ENCODE measurements at regions of chr3 and their contacts with region 1.

Region 1: GRCh38 chr3:171459942-171460724 is at the start of gene TNIK:
- DNase-seq: peak; percentile 97
- H3K4me3 ChIP-seq: peak within 1 kb of the TSS; percentile 61 to 95 (median 88)
- H3K27ac ChIP-seq: peak within 1 kb of the TSS; percentile 79 to 89 (median 88)
- H3K4me1 ChIP-seq: peaks cover 12 to 52% (median 49%) of the 10 kb centered on the region in 4 donors
- H3K27me3 ChIP-seq: no peaks in the 10 kb centered on the region
- CTCF ChIP-seq: no peak
- EP300 ChIP-seq: no peak
- POLR2A ChIP-seq: peak; percentile 31
- total RNA-seq, gene TNIK: 30.3 to 39.0 (median 36.8) TPM

Region 2: DNA sequence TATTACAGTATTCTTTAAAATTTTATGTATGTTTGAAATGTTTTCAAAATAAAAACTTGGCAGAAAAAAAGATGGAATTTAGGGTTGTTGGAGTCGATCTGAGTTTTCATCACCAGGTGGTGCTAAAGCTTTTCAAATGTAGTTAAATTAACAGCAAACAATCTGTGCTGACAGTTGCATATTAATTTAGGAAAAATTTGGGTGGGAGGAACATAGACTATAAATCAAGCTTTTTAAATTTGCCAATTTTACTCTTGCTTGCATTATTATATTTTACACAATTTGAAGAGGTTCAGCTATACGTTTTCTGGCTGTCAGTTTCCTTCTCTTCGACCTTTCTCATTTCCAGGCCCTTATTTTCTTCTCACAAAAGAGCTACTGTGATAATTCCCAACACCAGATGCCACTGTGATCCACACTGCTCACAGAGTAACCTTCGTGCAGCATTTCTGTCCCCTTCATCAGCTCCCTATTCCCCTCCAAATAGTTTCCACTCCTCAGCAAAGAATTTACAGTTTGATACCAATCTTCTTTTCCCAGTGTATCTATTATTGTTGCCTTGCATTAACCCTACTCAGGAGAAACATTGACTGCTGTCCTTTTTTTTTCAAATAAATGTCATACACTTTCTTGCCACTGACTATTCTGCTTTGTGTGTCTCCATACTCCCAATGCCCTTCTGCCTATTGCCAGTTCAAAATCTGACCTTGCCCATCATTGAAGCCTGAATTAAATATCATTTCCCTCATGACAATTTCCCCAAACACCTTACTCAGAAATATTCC is 498.3 kb before region 1 on chr3:
- intact Hi-C with region 1: loop called (anchors 10 kb)
- DNase-seq: no peak
- H3K4me3 ChIP-seq: no peak overlapping the region
- H3K27ac ChIP-seq: no peak overlapping the region
- H3K4me1 ChIP-seq: no peaks in the 10 kb centered on the region
- H3K27me3 ChIP-seq: no peaks in the 10 kb centered on the region
- CTCF ChIP-seq: peak; percentile 63 to 65 (median 63)
- EP300 ChIP-seq: no peak
- POLR2A ChIP-seq: no peak

Region 3: GRCh38 chr3:171068658-171069057 is 391.5 kb before region 1 on chr3:
- intact Hi-C with region 1: loop called (anchors 10 kb)
- DNase-seq: no peak
- H3K4me3 ChIP-seq: no peak overlapping the region
- H3K27ac ChIP-seq: no peak overlapping the region
- H3K4me1 ChIP-seq: no peaks in the 10 kb centered on the region
- H3K27me3 ChIP-seq: no peaks in the 10 kb centered on the region
- CTCF ChIP-seq: no peak
- EP300 ChIP-seq: no peak
- POLR2A ChIP-seq: no peak

Region 4: DNA sequence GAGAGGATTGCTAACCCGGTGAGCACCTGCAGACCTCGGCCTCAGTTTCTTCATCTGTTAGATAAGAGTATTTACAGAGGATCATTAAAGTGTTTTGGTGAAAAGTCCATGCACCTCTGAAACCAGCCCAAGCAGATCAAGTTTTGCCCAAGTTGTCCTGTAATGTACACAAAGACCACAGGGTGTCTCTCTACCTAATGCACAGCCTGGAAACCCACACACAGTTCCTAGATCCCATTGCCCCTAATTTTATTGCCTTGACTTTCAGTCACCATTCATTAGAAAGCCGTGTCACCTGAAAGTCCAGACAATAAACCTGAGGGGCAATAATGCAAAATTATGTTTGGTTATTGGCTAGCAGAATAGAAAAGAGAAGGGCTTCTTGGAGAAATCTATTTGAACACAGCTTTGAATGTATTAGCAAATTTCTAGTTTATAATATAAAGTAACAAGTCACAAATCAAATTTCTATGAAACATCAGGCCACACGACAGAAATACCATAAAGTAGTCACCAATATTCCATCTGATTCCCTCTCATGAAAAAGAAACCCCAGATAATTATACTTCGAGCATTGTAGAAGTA is 272.3 kb before region 1 on chr3:
- intact Hi-C with region 1: loop called (anchors 5 kb)
- DNase-seq: no peak
- H3K4me3 ChIP-seq: no peak overlapping the region
- H3K27ac ChIP-seq: no peak overlapping the region
- H3K4me1 ChIP-seq: peaks cover 19 to 50% (median 41%) of the 10 kb centered on the region in 4 donors
- H3K27me3 ChIP-seq: no peaks in the 10 kb centered on the region
- CTCF ChIP-seq: peak; percentile 55 to 58 (median 55)
- EP300 ChIP-seq: no peak
- POLR2A ChIP-seq: no peak

Region 5: DNA sequence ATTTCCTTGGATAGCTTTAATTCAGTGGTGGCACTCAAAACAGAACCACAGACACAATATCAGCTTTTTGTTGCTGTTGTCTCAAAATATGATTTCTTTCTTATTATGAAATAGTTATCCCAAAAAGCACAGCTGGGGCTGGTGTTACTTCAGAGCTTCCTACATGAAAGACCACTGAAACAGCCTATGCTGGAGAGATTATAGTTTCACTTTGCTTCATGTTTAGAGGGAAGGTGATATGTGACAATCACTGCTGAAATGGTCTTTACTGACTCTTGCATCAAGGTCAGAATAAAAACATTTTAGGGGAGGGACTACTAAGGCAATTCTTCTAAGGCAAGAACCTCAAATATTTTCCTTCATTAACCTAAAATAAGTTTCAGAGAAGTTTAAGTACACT is 190.6 kb before region 1 on chr3:
- intact Hi-C with region 1: loop called (anchors 10 kb)
- DNase-seq: no peak
- H3K4me3 ChIP-seq: no peak overlapping the region
- H3K27ac ChIP-seq: no peak overlapping the region
- H3K4me1 ChIP-seq: peaks cover 23 to 60% (median 44%) of the 10 kb centered on the region in 4 donors
- H3K27me3 ChIP-seq: no peaks in the 10 kb centered on the region
- CTCF ChIP-seq: no peak
- EP300 ChIP-seq: no peak
- POLR2A ChIP-seq: no peak

Region 6: DNA sequence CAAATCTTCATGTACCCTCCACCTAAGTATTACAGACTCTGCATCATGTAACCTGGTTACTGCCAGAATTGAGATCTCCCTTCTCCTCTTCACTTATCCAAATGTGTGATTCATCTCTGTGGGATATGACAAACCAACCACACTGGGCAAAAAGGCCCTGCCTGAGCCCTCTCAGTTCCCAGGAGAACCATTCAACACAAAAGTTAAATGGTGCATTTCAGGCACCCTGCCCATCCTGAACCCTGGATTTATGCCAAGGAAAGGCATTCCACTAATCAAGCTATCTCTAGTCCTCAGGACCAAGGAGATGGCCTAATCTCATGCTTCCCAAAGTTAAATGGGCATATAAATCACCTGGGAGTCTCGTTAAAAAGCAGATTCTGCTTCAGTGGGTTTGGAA is 108.5 kb before region 1 on chr3:
- intact Hi-C with region 1: loop called (anchors 10 kb)
- DNase-seq: no peak
- H3K4me3 ChIP-seq: no peak overlapping the region
- H3K27ac ChIP-seq: no peak overlapping the region
- H3K4me1 ChIP-seq: peaks cover 13 to 42% (median 30%) of the 10 kb centered on the region in 4 donors
- H3K27me3 ChIP-seq: no peaks in the 10 kb centered on the region
- CTCF ChIP-seq: no peak
- EP300 ChIP-seq: no peak
- POLR2A ChIP-seq: no peak

Region 7: DNA sequence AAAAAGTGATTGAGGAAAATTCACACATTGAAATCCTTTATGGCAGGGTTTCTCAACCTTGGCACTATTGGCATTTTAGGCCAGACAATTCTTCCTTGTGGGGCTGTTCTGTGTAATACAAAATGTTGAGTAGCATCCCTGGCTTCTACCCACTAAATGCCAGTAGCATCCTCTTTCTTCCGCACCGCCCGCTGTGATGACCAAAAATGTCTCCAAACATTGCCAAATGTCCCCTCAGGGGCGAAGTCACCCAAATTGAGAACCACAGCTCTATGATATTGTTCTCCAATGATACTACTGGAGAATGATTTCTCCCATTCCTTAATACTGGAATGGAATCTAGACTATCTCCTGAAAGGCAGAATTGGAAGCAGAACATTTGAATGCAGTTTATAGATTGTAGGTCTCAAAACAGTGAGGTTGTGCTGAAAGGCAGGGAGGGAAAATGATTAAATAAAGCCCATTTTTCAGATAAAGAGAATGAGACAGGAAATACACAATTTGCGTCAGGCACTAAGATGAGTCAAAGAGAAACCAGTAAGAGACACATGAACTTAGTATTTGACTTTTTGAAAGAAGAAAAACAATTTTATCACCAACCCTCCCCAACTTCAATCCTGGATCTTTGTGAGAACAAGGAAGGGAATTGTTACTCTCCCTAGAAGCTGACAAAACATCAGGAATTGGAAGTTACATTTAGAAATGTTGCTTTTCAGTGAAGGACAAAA is 101.6 kb after region 1 on chr3:
- intact Hi-C with region 1: loop called (anchors 5 kb)
- DNase-seq: no peak
- H3K4me3 ChIP-seq: no peak overlapping the region
- H3K27ac ChIP-seq: no peak overlapping the region
- H3K4me1 ChIP-seq: peaks cover 0 to 13% (median under 1%) of the 10 kb centered on the region in 4 donors
- H3K27me3 ChIP-seq: no peaks in the 10 kb centered on the region
- CTCF ChIP-seq: no peak
- EP300 ChIP-seq: no peak
- POLR2A ChIP-seq: no peak

Region 8: DNA sequence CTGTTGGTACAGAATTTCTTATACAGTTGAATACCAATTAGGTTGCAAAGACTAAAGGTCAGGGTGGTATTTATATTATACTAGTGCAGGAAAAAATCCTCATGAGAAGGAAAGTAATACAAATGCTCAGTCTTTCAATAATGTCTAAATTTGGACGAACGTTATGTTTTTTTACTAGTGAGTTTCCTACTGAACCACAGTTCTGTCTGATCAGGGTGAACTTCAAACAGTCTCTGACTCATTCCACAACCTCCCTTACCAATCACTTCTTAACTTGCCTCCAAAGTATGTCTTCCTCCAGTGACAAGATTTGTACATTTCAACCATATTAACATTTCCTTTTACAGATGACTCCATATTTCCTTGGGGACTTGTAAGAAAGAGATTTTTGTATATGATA is 386.5 kb after region 1 on chr3:
- intact Hi-C with region 1: no loop called
- DNase-seq: no peak
- H3K4me3 ChIP-seq: no peak overlapping the region
- H3K27ac ChIP-seq: no peak overlapping the region
- H3K4me1 ChIP-seq: peaks cover 7 to 21% (median 20%) of the 10 kb centered on the region in 4 donors
- H3K27me3 ChIP-seq: no peaks in the 10 kb centered on the region
- CTCF ChIP-seq: no peak
- EP300 ChIP-seq: no peak
- POLR2A ChIP-seq: no peak